ENCODE measurements at regions of chr10 and their contacts with region 1.

Region 1: DNA sequence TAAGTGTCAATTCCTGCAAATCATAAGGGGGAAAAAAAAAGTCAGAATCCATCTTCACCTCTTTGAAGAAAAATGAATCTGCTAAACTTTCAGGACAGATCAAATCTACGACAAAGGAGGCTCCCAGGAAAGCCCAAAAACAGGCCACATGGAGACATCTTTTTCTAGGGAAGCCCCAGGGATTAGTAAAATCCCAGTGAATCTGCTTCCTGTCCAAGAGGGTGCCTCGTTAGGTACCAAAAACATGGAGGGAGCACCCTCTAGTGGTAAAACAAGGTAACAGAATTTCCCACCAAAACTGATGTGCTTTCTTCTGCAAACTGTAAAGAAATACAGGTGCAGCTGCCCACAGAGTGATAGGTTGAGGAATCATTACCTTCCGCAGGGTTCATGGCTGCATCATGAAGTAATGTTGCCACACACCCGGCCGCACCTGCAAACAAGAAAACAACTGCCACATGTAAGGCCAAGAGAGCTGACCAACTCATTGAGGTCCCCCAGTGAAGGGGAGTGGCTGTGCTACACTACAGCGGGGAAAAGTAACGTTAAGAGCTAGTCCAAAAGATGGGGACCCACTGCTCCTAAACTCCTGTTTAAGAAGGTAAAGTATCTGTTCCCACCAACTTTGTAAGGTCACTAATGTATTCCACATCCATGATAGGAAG is 7.9 kb downstream of the SLC25A28 start:
- DNase-seq: peak in 2 of 4 donors; percentile 40 to 65
- ATAC-seq: peak; percentile 89
- H3K4me3 ChIP-seq: no peak overlapping the region
- H3K27ac ChIP-seq: no peak overlapping the region
- H3K4me1 ChIP-seq: peaks cover 3 to 35% of the 10 kb centered on the region in 2 donors
- H3K27me3 ChIP-seq: no peaks in the 10 kb centered on the region
- CTCF ChIP-seq: peak; percentile 67 to 76

Region 2: GRCh38 chr10:99394761-99395386 is 217.4 kb before region 1 on chr10:
- intact Hi-C with region 1: loop called in 1 of 2 experiments (anchors 5 kb)
- DNase-seq: peak in 2 of 4 donors; percentile 18 to 40
- ATAC-seq: peak; percentile 82
- H3K4me3 ChIP-seq: no peak overlapping the region
- H3K27ac ChIP-seq: no peak overlapping the region
- H3K4me1 ChIP-seq: peaks cover 4 to 7% of the 10 kb centered on the region in 2 donors
- H3K27me3 ChIP-seq: no peaks in the 10 kb centered on the region
- CTCF ChIP-seq: no peak

Region 3: GRCh38 chr10:99742701-99743100 is 130.4 kb after region 1 on chr10:
- intact Hi-C with region 1: no loop called
- DNase-seq: no peak
- ATAC-seq: no peak
- H3K4me3 ChIP-seq: no peak overlapping the region
- H3K27ac ChIP-seq: no peak overlapping the region
- H3K4me1 ChIP-seq: no peaks in the 10 kb centered on the region
- H3K27me3 ChIP-seq: no peaks in the 10 kb centered on the region
- CTCF ChIP-seq: no peak